ENCODE measurements at regions of chr16 and their contacts with region 1.

Region 1: GRCh38 chr16:75385507-75386152 is 47.7 kb downstream of the CFDP1 start:
- DNase-seq: peak in 2 of 5 donors; percentile 87 to 92
- H3K4me3 ChIP-seq: no peak overlapping the region
- H3K27ac ChIP-seq: no peak overlapping the region
- H3K4me1 ChIP-seq: peaks cover 0 to 8% (median 5%) of the 10 kb centered on the region in 3 donors
- H3K27me3 ChIP-seq: no peaks in the 10 kb centered on the region
- CTCF ChIP-seq: peak; percentile 70

Region 2: GRCh38 chr16:75234856-75235696 is 150.6 kb before region 1 on chr16:
- intact Hi-C with region 1: loop called (anchors 5 kb)
- DNase-seq: peak in 2 of 5 donors; percentile 50 to 76
- H3K4me3 ChIP-seq: no peak overlapping the region
- H3K27ac ChIP-seq: peak overlapping the region in 1 of 2 donors; percentile 0
- H3K4me1 ChIP-seq: peaks cover 0 to 29% (median 20%) of the 10 kb centered on the region in 3 donors
- H3K27me3 ChIP-seq: no peaks in the 10 kb centered on the region
- CTCF ChIP-seq: no peak

Region 3: DNA sequence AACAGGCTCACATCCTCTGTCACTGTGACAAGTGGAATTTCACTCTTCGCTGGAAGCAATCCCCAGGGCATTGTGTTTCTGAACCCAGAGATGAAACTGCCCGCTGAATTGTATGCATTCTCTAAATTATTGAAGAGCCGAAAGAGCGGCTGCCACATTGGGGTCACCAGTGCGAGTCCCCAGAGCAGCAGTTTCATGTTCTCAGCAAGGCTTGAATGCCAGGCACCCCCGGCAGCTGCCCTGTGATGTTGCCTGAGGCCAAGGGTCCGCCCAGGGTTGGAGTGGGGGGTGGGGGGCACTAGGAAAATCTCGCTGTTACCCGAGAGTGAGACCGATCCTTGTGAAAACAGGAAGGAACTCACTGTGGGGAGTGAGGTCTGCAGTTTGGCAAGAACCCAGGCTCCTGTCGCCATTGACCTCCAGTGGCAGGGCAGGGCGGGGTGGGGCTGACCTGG is 113.5 kb before region 1 on chr16:
- intact Hi-C with region 1: no loop called
- DNase-seq: peak; percentile 45 to 75 (median 56)
- H3K4me3 ChIP-seq: no peak overlapping the region
- H3K27ac ChIP-seq: no peak overlapping the region
- H3K4me1 ChIP-seq: no peaks in the 10 kb centered on the region
- H3K27me3 ChIP-seq: no peaks in the 10 kb centered on the region
- CTCF ChIP-seq: no peak

Measured in kidney (tissue), 22 donors.